ENCODE measurements at regions of chr22 and their contacts with region 1.

Region 1: DNA sequence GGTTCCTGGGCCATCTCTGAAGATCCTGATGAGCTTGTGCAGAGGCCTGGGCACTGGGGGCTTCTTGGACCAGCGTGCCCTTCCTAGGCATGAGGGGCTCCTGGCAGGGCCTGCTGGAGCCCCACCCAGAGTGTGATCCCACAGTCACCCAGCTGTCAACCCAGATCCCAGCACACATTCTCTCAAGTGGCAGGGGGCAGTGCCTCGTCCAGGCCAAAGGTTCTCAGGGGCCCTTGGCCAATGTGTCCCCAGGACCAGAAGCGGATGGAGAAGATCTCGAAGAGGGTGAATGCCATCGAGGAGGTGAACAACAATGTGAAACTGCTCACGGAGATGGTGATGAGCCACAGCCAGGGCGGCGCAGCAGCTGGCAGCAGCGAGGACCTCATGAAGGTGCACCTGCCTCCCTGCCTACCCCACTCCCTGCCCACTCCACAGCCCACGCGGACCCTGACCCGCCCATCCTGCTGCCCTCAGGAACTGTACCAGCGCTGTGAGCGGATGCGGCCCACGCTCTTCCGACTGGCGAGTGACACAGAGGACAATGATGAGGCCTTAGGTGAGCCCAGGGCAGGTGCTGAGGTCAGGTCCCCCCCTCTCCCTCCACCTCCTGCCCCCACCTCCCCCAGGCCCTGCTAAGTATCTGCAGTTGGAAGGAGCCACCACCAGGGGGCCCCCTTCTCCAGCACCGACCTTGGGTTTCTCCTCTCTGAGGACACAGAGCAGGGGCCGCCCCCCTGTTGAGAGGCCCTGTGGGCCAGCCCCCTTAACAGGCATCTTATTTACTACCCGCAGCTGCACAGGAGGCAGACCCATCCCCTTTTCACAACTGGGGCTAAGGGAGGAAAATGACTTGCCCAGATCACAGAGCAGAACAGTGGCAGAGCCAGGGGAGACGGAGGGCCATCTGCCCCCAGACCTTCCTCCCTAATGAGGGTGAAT is 14.7 kb downstream of the GGA1 start:
- DNase-seq: peak; percentile 62 to 88 (median 88)
- ATAC-seq: peak; percentile 55 to 58
- H3K4me3 ChIP-seq: no peak overlapping the region
- H3K27ac ChIP-seq: no peak overlapping the region
- H3K4me1 ChIP-seq: no peaks in the 10 kb centered on the region
- H3K27me3 ChIP-seq: no peaks in the 10 kb centered on the region

Region 2: DNA sequence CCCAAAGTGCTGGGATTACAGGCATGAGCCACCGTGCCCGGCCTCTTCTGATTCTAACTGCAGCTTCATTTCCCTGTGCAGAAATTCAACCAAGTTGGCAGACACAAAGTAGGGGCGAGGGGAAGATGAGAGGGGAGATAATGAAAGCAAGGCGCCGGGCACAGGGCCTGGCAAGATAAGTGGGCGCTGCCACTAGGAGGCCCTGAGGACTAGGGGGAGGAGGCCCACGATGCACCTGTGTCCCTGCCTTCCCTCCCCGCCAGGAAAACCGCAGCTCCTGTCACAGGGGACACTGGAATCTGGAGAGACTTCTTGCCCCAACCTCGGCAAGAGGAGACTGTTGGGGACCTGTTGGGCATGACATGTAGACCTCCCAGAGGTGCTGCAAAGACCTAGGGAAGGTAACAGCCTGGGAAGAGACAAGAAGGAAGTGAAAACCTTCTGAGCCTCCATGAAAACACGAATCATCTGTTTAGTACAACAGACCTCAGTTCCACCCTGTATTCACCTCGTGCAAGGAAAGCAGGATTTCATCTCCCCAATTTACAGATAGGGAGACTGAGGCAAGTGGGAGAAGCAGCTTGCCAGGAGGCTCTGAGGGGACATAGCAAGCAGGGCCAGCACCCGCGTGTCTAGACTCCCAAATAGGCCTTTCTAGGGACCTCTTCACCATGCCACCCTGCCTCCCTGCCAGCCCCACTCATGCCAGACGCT is 49.0 kb after region 1 on chr22:
- intact Hi-C with region 1: no loop called
- DNase-seq: no peak
- ATAC-seq: no peak
- H3K4me3 ChIP-seq: no peak overlapping the region
- H3K27ac ChIP-seq: no peak overlapping the region
- H3K4me1 ChIP-seq: peaks cover 3% of the 10 kb centered on the region
- H3K27me3 ChIP-seq: no peaks in the 10 kb centered on the region

Region 3: DNA sequence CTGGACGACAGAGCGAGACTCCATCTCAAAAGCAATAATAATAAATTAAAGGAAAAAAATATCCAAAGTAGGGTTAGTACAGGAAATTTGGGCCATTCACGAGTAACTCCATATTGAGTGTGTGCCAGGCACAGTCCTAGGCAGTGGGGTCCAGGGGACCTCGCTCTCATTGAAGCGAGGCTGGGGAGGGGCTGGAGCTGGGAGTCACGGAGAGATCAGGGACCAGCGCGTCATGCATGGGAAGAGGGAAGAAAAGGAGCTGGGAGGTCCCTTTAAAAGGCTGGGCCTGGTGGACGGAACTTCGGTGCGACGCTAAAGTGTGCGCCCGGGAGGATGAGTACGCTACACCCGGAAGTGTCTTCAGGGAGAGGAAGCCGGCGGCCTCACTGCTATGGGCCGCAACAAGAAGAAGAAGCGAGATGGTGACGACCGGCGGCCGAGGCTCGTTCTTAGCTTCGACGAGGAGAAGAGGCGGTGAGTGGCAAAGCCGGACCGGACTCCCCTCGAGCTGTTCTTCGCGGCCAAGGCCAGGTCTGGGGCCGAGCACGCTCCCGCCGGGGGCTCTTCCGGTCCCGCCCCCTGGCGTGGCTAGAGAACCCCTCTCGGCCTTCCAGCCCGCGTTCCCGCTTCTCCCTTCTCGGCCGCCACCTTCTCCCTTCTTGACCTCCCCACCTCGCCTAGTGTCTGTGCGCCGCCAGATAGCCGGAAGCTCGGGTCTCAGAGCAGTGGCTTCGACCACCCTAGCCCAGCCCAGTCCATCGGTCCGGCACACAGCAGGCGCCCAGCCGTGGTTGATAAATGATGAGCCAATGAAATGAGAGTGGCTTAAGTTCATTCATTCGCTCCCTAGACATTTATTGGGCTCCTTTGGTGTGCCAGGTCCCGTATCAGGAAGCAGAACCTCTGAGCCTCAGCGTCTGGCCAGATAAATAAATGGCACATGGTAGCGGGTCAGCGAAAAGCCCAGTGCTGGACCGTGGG is 62.9 kb after region 1 on chr22 and contains the start of gene NOL12:
- intact Hi-C with region 1: loop called in 1 of 4 experiments (anchors 10 kb)
- DNase-seq: peak; percentile 84 to 91 (median 90)
- ATAC-seq: peak; percentile 91
- H3K4me3 ChIP-seq: peak within 1 kb of the TSS; percentile 97
- H3K27ac ChIP-seq: peak within 1 kb of the TSS; percentile 98
- H3K4me1 ChIP-seq: peaks cover 2% of the 10 kb centered on the region
- H3K27me3 ChIP-seq: no peaks in the 10 kb centered on the region
- total RNA-seq, gene NOL12: 13.5 to 16.4 (median 14.4) TPM

Region 4: GRCh38 chr22:37792494-37792893 is 169.1 kb after region 1 on chr22:
- intact Hi-C with region 1: loop called in 1 of 4 experiments (anchors 2 kb)
- DNase-seq: peak in 1 of 3 donors; percentile 21
- ATAC-seq: no peak
- H3K4me3 ChIP-seq: no peak overlapping the region
- H3K27ac ChIP-seq: no peak overlapping the region
- H3K4me1 ChIP-seq: no peaks in the 10 kb centered on the region
- H3K27me3 ChIP-seq: no peaks in the 10 kb centered on the region

Measured in right cardiac atrium (tissue), 5 donors.